ENCODE measurements at regions of chr14 and their contacts with region 1.

Region 1: GRCh38 chr14:72535485-72535884 is 358.4 kb downstream of the DPF3 start:
- DNase-seq: no peak
- H3K4me3 Mint-ChIP-seq: no peak overlapping the region
- H3K27ac Mint-ChIP-seq: no peak overlapping the region
- H3K4me1 Mint-ChIP-seq: peaks cover 39% of the 10 kb centered on the region
- H3K27me3 Mint-ChIP-seq: no peaks in the 10 kb centered on the region

Region 2: DNA sequence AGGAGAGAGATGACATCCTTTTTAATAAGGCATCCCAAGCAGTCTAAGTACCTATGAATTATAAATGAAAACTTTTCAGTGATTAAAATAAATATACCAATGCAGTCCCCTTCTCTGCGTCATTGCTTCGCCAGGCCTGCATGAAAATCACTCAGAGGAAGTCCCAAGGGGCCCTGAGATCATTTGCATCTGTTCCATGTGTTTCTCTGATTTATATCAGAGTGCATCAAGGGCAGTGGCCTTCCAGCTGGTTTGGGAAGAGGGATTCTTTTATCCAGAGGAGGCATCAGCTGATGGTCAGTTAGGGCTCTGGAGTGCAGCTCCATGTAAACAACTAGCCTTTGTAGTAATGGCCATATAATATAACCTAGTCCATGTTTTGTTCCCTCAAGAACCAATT is 393.2 kb before region 1 on chr14:
- CTCF ChIA-PET with region 1: no interaction called
- intact Hi-C with region 1: no loop called
- DNase-seq: no peak
- H3K4me3 Mint-ChIP-seq: no peak overlapping the region
- H3K27ac Mint-ChIP-seq: no peak overlapping the region
- H3K4me1 Mint-ChIP-seq: no peaks in the 10 kb centered on the region
- H3K27me3 Mint-ChIP-seq: peaks cover 8% of the 10 kb centered on the region

Region 3: GRCh38 chr14:72443991-72444441 is 91.5 kb before region 1 on chr14:
- CTCF ChIA-PET with region 1: no interaction called
- intact Hi-C with region 1: no loop called
- DNase-seq: peak; percentile 60
- H3K4me3 Mint-ChIP-seq: no peak overlapping the region
- H3K27ac Mint-ChIP-seq: peak overlapping the region; percentile 12
- H3K4me1 Mint-ChIP-seq: peaks cover 32% of the 10 kb centered on the region
- H3K27me3 Mint-ChIP-seq: no peaks in the 10 kb centered on the region

Region 4: DNA sequence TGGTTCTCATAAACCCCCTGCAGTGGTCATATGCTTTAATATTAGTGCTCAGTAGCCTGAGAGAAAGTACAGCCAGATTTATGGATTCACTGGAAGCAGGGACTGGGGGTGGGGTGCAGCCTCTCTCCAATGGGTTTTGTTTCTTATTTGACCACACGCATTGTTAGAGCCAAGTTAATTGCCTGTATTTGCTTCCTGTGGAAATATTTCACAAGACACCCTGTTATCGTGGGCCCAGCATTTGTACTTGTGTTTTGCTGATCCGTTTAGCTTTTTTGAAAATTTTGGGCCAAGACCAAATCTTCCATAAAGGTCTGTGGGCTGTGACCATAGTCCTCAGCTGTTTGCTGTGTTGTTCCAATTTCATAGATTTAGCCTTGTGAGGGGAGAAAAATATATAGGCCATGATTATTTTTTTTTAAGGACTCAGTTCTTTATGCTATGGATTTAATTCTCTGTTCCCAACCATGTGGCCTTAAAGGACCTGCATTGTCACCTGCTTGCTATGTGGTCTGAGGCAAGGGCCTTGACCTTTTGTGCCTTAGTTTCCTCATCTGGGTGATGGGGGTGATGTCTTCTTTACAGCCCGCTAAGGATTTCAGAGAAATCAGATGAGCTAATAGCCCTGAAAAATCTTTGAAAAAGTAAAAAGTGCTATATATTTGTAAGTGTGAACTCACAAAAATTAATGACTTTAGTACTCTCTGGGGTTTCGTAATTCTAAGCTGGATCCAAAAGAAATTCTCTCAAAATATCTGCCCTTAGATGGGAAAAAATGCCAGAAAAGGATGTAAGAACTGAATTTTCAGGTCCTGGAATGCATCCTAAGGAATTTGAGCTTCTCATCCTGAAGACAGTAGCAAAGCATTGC is 11.8 kb before region 1 on chr14:
- CTCF ChIA-PET with region 1: interaction called, 4 read pairs
- intact Hi-C with region 1: loop called (anchors 1 kb)
- DNase-seq: no peak
- H3K4me3 Mint-ChIP-seq: no peak overlapping the region
- H3K27ac Mint-ChIP-seq: no peak overlapping the region
- H3K4me1 Mint-ChIP-seq: peaks cover 44% of the 10 kb centered on the region
- H3K27me3 Mint-ChIP-seq: no peaks in the 10 kb centered on the region

Region 5: DNA sequence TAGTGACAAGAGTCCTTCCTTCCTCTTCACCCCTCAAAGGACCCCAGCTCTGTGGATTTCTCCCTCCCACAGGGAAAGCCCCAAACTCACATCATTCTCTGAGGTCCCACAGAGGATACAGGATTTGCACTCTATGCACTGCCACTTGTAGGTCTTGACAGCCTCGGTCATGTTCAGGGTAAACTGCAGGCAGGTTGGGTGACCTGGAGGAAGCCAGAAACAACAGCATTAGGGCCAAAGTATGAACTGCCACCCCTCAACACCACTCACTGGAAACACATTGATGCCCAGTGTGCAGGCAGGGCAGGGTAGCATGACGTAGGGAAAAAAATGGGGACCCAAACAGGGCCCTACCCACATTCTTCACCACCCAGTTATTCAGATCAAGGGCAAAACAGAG is 94.0 kb after region 1 on chr14:
- CTCF ChIA-PET with region 1: no interaction called
- intact Hi-C with region 1: loop called (anchors 5 kb)
- DNase-seq: no peak
- H3K4me3 Mint-ChIP-seq: no peak overlapping the region
- H3K27ac Mint-ChIP-seq: no peak overlapping the region
- H3K4me1 Mint-ChIP-seq: no peaks in the 10 kb centered on the region
- H3K27me3 Mint-ChIP-seq: no peaks in the 10 kb centered on the region